Motor neuron (in vitro differentiated cells): ENCODE measurements at regions of chr1 and their contacts with region 1.

Region 1: GRCh38 chr1:158998781-158999161 is 10.9 kb upstream of the IFI16 start:
- ATAC-seq: peak in 3 of 8 experiments; percentile 4 to 10 (median 9)
- H3K4me3 ChIP-seq: peak overlapping the region; percentile 32 to 48 (median 44)
- H3K27ac ChIP-seq: peak overlapping the region; percentile 71 to 75
- H3K4me1 ChIP-seq: peaks cover 2 to 8% of the 10 kb centered on the region in 2 donors

Region 2: GRCh38 chr1:158527190-158527815 is 471.5 kb before region 1 on chr1:
- in situ Hi-C with region 1: loop called in 1 of 9 experiments (anchors 25 kb)
- ATAC-seq: peak in 4 of 8 experiments; percentile 39 to 94 (median 76)
- H3K4me3 ChIP-seq: no peak overlapping the region
- H3K27ac ChIP-seq: no peak overlapping the region
- H3K4me1 ChIP-seq: no peaks in the 10 kb centered on the region

Region 3: GRCh38 chr1:158564608-158565007 is 434.2 kb before region 1 on chr1:
- in situ Hi-C with region 1: no loop called
- ATAC-seq: no peak
- H3K4me3 ChIP-seq: no peak overlapping the region
- H3K27ac ChIP-seq: no peak overlapping the region
- H3K4me1 ChIP-seq: no peaks in the 10 kb centered on the region